PC-3 (cell line): ENCODE measurements at regions of chr6 and their contacts with region 1.

Region 1: DNA sequence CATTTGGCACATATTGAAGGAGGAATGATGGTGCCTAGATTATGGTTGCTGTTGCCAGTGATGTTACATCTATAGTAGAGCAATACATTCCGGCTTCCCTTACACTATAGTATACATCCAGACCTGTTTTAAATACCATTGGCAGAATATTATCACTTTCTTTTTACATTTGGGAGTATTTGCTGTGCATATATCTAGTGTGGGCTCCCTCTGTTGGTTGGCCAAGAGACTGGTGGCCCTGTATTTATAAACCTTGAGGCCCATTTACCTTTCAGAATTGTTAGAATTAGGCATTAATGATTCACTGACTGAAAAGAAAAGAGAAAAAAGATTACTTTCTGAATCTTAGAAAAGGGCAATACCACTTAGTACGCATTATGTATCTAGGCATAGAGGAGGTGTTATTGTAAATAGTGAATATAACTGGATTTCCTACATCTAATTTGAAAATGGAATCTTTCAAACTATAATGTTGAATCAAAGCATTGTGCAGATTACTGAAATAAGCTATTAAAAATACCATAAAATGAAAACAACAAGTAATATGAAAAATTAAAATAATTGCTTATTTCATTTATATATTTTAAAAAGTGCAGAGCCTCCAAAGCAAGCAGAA is 628.8 kb upstream of the MAN1A1 start:
- DNase-seq: peak; percentile 51
- ATAC-seq: peak; percentile 64
- H3K4me3 ChIP-seq: no peak overlapping the region
- H3K27ac ChIP-seq: no peak overlapping the region
- H3K4me1 ChIP-seq: no peaks in the 10 kb centered on the region
- H3K27me3 ChIP-seq: no peaks in the 10 kb centered on the region
- CTCF ChIP-seq: peak; percentile 81

Region 2: DNA sequence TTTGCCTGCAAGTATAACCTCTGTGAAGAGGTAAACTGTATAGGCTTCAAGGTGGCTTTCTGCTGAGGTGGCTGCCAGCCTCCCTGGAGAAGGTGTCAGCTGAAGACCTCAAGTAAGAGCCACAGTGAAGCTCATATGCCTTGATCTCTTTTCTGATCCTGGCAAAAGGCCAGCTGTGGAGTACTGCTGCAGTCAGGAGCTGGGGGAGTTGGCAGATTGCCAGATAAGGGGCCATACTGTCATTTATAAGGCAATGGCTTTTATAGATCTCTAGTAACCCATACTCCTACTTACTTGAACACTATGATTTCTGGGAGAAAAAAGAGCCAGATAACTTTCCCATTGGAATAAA is 1318.2 kb before region 1 on chr6:
- CTCF ChIA-PET with region 1: no interaction called
- POLR2A ChIA-PET with region 1: no interaction called
- intact Hi-C with region 1: no loop called
- DNase-seq: no peak
- ATAC-seq: no peak
- H3K4me3 ChIP-seq: no peak overlapping the region
- H3K27ac ChIP-seq: no peak overlapping the region
- H3K4me1 ChIP-seq: peaks cover 4% of the 10 kb centered on the region; the same call in 1 of the 2 replicates
- H3K27me3 ChIP-seq: no peaks in the 10 kb centered on the region
- CTCF ChIP-seq: no peak

Region 3: GRCh38 chr6:119757467-119757866 is 220.9 kb before region 1 on chr6:
- CTCF ChIA-PET with region 1: no interaction called
- POLR2A ChIA-PET with region 1: no interaction called
- intact Hi-C with region 1: no loop called
- DNase-seq: no peak
- ATAC-seq: no peak
- H3K4me3 ChIP-seq: no peak overlapping the region
- H3K27ac ChIP-seq: no peak overlapping the region
- H3K4me1 ChIP-seq: no peaks in the 10 kb centered on the region
- H3K27me3 ChIP-seq: no peaks in the 10 kb centered on the region
- CTCF ChIP-seq: no peak

Region 4: GRCh38 chr6:119929121-119929520 is 49.3 kb before region 1 on chr6:
- CTCF ChIA-PET with region 1: no interaction called
- POLR2A ChIA-PET with region 1: no interaction called
- intact Hi-C with region 1: no loop called
- DNase-seq: no peak
- ATAC-seq: no peak
- H3K4me3 ChIP-seq: no peak overlapping the region
- H3K27ac ChIP-seq: no peak overlapping the region
- H3K4me1 ChIP-seq: no peaks in the 10 kb centered on the region
- H3K27me3 ChIP-seq: no peaks in the 10 kb centered on the region
- CTCF ChIP-seq: no peak

Region 5: DNA sequence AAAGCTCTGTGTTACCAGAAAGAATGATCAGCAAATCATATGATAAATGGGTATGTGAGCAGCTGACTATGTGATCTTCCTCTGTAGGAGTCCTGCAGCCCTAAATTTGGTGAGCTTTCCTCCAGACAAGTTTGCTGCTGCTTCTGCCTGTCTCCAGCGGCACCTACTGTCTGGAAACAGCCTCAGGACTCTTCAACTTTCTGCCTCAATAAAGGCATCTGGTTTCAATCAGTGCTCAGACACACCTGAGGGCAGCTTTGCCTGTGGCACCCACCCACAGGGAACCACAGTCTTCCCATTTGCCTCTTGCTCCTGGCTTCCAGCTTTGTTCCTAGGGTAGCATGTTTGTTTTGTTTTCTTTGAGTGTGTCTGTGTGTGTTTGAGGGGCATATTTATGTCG is 99.1 kb after region 1 on chr6:
- CTCF ChIA-PET with region 1: interaction called, 4 read pairs
- POLR2A ChIA-PET with region 1: no interaction called
- intact Hi-C with region 1: loop called (anchors 10 kb)
- DNase-seq: peak; percentile 45
- ATAC-seq: peak; percentile 86
- H3K4me3 ChIP-seq: no peak overlapping the region
- H3K27ac ChIP-seq: no peak overlapping the region
- H3K4me1 ChIP-seq: no peaks in the 10 kb centered on the region
- H3K27me3 ChIP-seq: no peaks in the 10 kb centered on the region
- CTCF ChIP-seq: peak; percentile 56

Region 6: DNA sequence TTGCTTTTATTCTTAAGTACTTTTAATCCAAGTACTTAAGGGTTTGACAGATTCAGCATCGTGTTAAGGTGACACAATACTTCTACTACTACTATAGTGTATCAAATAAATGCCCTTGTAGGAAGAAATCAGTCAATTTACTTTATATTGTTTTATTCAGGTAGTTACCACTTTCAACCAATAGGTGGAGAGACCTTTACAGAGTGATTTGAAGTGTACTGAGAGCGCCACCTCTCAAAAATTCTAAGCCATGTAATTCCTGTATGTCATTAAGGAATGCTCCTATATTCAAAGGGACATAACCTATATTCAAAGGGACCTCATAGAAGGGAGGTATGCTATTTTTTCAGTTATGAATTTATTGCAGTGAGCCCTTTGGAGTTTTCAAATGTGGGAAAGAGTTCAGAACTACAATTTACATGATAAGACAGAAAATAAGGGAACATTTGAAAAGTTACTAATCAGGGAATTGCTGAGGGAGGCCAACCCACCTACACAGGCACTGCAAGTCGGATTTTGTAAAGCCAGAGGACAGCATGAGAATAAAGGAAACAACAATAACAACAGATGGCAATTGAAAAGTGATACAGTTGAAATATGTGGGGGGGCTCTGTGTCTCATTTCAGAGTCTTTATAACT is 400.3 kb after region 1 on chr6:
- CTCF ChIA-PET with region 1: no interaction called
- POLR2A ChIA-PET with region 1: no interaction called
- intact Hi-C with region 1: loop called (anchors 2 kb)
- DNase-seq: peak; percentile 70
- ATAC-seq: peak; percentile 81
- H3K4me3 ChIP-seq: no peak overlapping the region
- H3K27ac ChIP-seq: no peak overlapping the region
- H3K4me1 ChIP-seq: no peaks in the 10 kb centered on the region
- H3K27me3 ChIP-seq: no peaks in the 10 kb centered on the region
- CTCF ChIP-seq: peak; percentile 92